Lower lobe of right lung (tissue), 2 donors: ENCODE measurements at regions of chr12 and their contacts with region 1.

Region 1: GRCh38 chr12:108664338-108665258 is 30.9 kb upstream of the SELPLG start:
- DNase-seq: peak; percentile 80
- ATAC-seq: peak; percentile 96 to 97
- H3K4me3 ChIP-seq: no peak overlapping the region
- H3K27ac ChIP-seq: peak overlapping the region; percentile 73
- H3K4me1 ChIP-seq: peaks cover 63% of the 10 kb centered on the region
- H3K27me3 ChIP-seq: no peaks in the 10 kb centered on the region
- CTCF ChIP-seq: peak; percentile 90

Region 2: GRCh38 chr12:108803428-108804105 is 139.0 kb after region 1 on chr12:
- intact Hi-C with region 1: loop called (anchors 5 kb)
- DNase-seq: peak; percentile 61
- ATAC-seq: peak; percentile 86 to 87
- H3K4me3 ChIP-seq: no peak overlapping the region
- H3K27ac ChIP-seq: peak overlapping the region; percentile 78
- H3K4me1 ChIP-seq: peaks cover 38% of the 10 kb centered on the region
- H3K27me3 ChIP-seq: no peaks in the 10 kb centered on the region
- CTCF ChIP-seq: peak; percentile 94

Region 3: GRCh38 chr12:109084425-109084824 is 419.8 kb after region 1 on chr12:
- intact Hi-C with region 1: no loop called
- DNase-seq: no peak
- ATAC-seq: no peak
- H3K4me3 ChIP-seq: no peak overlapping the region
- H3K27ac ChIP-seq: no peak overlapping the region
- H3K4me1 ChIP-seq: no peaks in the 10 kb centered on the region
- H3K27me3 ChIP-seq: no peaks in the 10 kb centered on the region
- CTCF ChIP-seq: no peak